MCF 10A (cell line): ENCODE measurements at regions of chr1 and their contacts with region 1.

Region 1: GRCh38 chr1:209585672-209586071 is 2.2 kb downstream of the CAMK1G start:
- DNase-seq: no peak
- H3K4me3 Mint-ChIP-seq: no peak overlapping the region
- H3K27ac Mint-ChIP-seq: no peak overlapping the region
- H3K4me1 Mint-ChIP-seq: peaks cover 10% of the 10 kb centered on the region
- H3K27me3 Mint-ChIP-seq: no peaks in the 10 kb centered on the region
- CTCF ChIP-seq: no peak

Region 2: GRCh38 chr1:209595599-209596285 is 10.1 kb after region 1 on chr1:
- CTCF ChIA-PET with region 1: interaction called, 193 read pairs
- POLR2A ChIA-PET with region 1: interaction called, 5 read pairs
- intact Hi-C with region 1: no loop called
- DNase-seq: no peak
- H3K4me3 Mint-ChIP-seq: no peak overlapping the region
- H3K27ac Mint-ChIP-seq: no peak overlapping the region
- H3K4me1 Mint-ChIP-seq: peaks cover 6% of the 10 kb centered on the region
- H3K27me3 Mint-ChIP-seq: no peaks in the 10 kb centered on the region
- CTCF ChIP-seq: peak; percentile 6